H1 (cell line): ENCODE measurements at regions of chr18 and their contacts with region 1.

Region 1: DNA sequence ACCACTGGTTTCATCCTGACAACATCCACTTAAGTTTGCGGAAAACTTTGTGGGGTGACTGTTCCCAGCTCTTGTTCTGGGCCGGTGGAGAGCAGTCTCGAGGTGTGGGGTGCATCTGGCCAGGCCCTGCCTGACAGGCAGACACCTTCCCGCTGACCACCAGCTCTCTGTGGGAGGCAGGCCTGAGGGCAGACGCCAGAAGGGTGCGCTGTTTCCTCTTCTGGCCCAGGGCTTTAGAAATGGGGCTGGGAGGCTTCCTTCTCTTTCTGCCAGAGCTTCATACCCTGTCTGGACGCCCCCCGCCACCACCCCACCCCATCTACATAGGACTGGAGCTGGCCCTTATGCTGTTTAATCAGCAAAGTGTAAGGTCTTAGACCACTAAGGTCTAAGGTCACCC is 263.8 kb downstream of the LOXHD1 start:
- DNase-seq: peak in 1 of 2 experiments; percentile 88
- H3K4me3 ChIP-seq: no peak overlapping the region
- H3K27ac ChIP-seq: no peak overlapping the region
- H3K4me1 ChIP-seq: no peaks in the 10 kb centered on the region; a peak in 1 of 7 replicates
- H3K27me3 ChIP-seq: no peaks in the 10 kb centered on the region; a peak in 1 of 7 replicates
- CTCF ChIP-seq: peak; percentile 85 to 92 (median 86)
- EP300 ChIP-seq: no peak
- POLR2A ChIP-seq: no peak
- RAD21 ChIP-seq: peak; percentile 84

Region 2: DNA sequence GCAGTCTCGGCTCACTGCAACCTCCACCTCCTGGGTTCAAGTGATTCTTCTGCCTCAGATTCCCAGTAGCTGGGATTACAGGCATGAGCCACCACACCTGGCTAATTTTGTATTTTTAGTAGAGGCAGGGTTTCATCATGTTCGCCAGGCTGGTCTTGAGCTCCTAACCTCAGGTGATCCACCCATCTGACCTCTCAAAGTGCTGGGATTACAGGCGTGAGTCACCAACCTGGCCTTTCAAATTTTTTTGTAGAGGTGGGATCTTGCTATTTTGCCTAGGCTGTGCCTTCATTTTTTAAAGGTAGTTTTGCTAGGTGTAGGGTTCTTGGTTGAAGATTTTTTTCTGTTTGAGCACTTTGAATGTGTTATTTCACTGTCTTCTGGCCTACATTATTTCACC is 282.8 kb before region 1 on chr18:
- CTCF ChIA-PET with region 1: no interaction called
- POLR2A ChIA-PET with region 1: no interaction called
- DNase-seq: no peak
- H3K4me3 ChIP-seq: no peak overlapping the region
- H3K27ac ChIP-seq: no peak overlapping the region
- H3K4me1 ChIP-seq: no peaks in the 10 kb centered on the region
- H3K27me3 ChIP-seq: no peaks in the 10 kb centered on the region
- CTCF ChIP-seq: no peak
- EP300 ChIP-seq: no peak
- POLR2A ChIP-seq: no peak
- RAD21 ChIP-seq: no peak

Region 3: GRCh38 chr18:46350598-46351159 is 42.6 kb before region 1 on chr18:
- CTCF ChIA-PET with region 1: interaction called, 10 read pairs
- POLR2A ChIA-PET with region 1: no interaction called
- DNase-seq: no peak
- H3K4me3 ChIP-seq: no peak overlapping the region
- H3K27ac ChIP-seq: no peak overlapping the region
- H3K4me1 ChIP-seq: no peaks in the 10 kb centered on the region; a peak in 1 of 7 replicates
- H3K27me3 ChIP-seq: no peaks in the 10 kb centered on the region
- CTCF ChIP-seq: no peak
- EP300 ChIP-seq: no peak
- POLR2A ChIP-seq: no peak
- RAD21 ChIP-seq: no peak

Region 4: DNA sequence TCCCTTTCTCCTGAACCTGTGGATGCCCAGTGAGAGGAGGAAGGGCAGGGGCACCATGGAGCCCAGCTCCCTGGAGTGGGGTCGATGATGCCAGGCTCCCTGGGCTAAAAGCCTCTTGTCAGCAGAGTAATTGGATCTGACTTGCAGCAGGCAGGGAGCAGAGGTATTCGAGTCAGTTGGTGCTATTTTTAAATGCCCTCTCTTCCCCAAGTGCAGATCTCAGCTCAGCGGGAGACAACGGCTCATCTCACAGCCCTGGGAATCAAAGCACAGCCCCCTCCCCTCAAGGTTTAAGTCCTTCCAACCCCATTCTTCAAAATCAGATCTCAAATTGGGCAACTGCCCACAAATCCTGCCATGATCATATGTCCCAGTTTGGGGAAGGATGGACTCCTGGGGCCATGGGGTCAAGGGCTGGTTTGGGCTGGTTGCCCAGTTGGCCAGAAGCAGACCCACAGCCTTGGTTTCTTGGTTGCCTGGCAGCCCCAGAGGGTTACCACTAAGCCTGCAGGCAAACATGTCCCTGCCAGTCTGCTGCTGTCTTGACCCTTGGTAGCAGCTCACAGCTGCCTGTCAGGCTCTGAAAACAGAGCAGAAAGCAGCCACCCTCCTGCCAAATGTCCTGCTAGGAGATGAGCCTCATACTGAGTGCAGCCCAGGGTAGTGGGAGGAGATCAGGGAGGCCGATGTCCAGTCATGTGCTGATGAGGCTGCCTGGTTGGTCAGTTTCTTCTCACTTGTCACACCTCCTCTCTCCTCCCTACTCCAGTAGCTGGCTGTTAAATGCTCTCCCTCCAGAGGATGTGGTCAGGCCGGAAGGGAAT is 18.8 kb after region 1 on chr18:
- CTCF ChIA-PET with region 1: interaction called, 150 read pairs
- POLR2A ChIA-PET with region 1: interaction called, 3 read pairs
- DNase-seq: no peak
- H3K4me3 ChIP-seq: no peak overlapping the region; a peak in 1 of 8 replicates
- H3K27ac ChIP-seq: no peak overlapping the region
- H3K4me1 ChIP-seq: peaks cover 20 to 38% (median 26%) of the 10 kb centered on the region in 4 experiments
- H3K27me3 ChIP-seq: no peaks in the 10 kb centered on the region; a peak in 2 of 7 replicates
- CTCF ChIP-seq: no peak
- EP300 ChIP-seq: no peak
- POLR2A ChIP-seq: no peak
- RAD21 ChIP-seq: no peak

Region 5: GRCh38 chr18:46445914-46446313 is 52.7 kb after region 1 on chr18:
- CTCF ChIA-PET with region 1: interaction called, 12 read pairs
- POLR2A ChIA-PET with region 1: no interaction called
- DNase-seq: no peak
- H3K4me3 ChIP-seq: no peak overlapping the region
- H3K27ac ChIP-seq: no peak overlapping the region
- H3K4me1 ChIP-seq: peaks cover 5 to 11% (median 7%) of the 10 kb centered on the region in 4 experiments
- H3K27me3 ChIP-seq: no peaks in the 10 kb centered on the region
- CTCF ChIP-seq: no peak
- EP300 ChIP-seq: no peak
- POLR2A ChIP-seq: no peak
- RAD21 ChIP-seq: peak in 1 of 2 experiments; percentile 28; a peak in 1 of 4 replicates

Region 6: DNA sequence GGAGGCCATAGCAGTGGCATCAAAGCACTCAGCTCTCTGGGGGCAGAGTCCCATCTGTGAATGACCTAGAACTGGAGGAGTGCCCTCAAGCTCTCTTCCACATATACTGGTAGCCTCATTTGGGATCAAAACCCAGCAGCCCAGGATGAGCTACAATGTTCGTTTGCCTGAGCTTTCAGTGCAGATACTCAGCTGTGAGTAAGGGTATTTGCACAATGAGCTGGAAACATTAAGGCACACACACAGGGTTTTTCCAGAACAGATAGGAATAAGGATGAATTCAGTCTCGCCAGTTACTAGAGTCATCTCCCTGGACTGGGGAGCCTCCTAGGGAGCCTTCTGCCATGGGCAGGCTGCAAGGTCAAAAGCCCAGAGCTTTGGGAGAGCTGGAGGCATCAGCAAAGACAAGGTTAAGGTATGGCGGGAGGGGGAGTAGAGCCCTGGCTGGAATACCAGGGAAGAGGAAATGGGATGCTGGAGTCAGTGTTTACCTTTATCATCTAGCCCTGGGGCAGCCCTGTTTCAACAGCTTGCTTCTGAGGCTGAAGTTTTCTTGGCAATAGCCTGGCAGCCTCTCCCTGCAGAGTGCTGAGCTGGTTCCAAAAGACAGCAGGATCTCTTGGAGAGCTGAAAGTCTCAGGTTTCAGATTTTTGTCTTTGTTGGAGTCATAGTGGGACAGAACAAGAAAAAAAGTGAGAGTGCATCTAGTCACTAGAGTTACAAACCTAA is 76.1 kb after region 1 on chr18:
- CTCF ChIA-PET with region 1: interaction called, 14 read pairs
- POLR2A ChIA-PET with region 1: no interaction called
- DNase-seq: no peak
- H3K4me3 ChIP-seq: no peak overlapping the region
- H3K27ac ChIP-seq: no peak overlapping the region
- H3K4me1 ChIP-seq: peaks cover 5 to 11% (median 6%) of the 10 kb centered on the region in 4 experiments; a peak in 4 of 7 replicates
- H3K27me3 ChIP-seq: peaks cover 0 to 1% (median 0%) of the 10 kb centered on the region in 4 experiments; a peak in 1 of 7 replicates
- CTCF ChIP-seq: no peak
- EP300 ChIP-seq: no peak
- POLR2A ChIP-seq: no peak
- RAD21 ChIP-seq: no peak

Region 7: DNA sequence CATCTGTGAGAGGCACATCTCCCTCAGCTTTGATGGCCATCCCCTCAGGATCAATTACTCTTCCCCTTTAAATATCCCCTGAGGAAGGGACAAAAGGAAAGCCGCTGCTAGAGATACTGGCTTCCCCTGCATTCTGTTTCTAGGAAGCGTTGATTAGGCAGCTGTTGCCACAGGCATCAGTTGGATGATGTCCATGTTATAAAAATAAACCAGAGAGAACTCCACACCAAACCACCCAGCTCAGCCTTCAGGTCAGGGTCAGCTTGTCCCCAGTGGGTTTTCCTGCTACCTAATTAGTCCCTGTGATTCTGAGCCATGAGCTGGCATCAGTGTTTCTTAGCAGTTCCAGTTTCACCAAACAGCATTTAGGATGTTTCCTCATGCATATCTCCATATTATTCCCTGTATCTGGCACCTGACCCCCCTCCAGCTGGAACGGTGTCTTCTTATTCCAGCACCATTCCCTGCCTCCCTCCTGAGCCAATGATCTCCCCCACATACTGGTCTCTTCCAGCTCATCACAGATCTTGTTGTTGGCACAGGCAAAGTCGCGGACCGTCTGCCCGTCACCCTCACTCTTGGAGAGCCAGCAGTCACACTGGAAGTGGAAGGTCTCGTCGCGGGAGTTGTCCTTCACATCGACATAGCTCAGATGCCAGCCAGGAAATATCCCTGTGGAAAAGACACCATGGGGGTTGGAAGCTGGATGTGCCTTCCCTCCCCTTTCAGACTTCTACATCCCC is 95.4 kb after region 1 on chr18:
- CTCF ChIA-PET with region 1: interaction called, 56 read pairs
- POLR2A ChIA-PET with region 1: no interaction called
- DNase-seq: no peak
- H3K4me3 ChIP-seq: no peak overlapping the region
- H3K27ac ChIP-seq: no peak overlapping the region
- H3K4me1 ChIP-seq: peaks cover 0 to 10% (median 7%) of the 10 kb centered on the region in 4 experiments; a peak in 5 of 7 replicates
- H3K27me3 ChIP-seq: peaks cover 0 to 3% (median 1%) of the 10 kb centered on the region in 4 experiments; a peak in 1 of 7 replicates
- CTCF ChIP-seq: no peak
- EP300 ChIP-seq: no peak
- POLR2A ChIP-seq: no peak
- RAD21 ChIP-seq: no peak

Region 8: DNA sequence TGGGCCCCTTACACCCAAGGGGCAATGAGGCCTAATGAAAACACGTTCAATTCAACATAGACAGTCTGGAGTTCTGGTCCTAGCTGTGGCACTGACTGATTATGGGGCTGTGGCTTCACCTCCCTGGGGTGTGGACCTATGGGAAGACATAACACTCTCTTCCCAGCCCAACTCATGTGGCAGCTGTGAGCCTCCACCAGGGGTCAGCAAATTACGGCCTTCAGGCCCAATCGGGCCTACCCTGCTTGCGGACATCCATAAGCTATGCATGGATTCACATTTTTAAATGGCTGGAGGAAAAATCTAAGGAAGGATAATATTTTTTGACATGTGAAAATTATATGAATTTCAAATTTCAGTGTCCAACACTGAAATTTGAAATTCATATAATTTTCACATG is 162.5 kb after region 1 on chr18:
- CTCF ChIA-PET with region 1: interaction called, 10 read pairs
- POLR2A ChIA-PET with region 1: no interaction called
- DNase-seq: peak; percentile 21 to 76
- H3K4me3 ChIP-seq: no peak overlapping the region
- H3K27ac ChIP-seq: no peak overlapping the region
- H3K4me1 ChIP-seq: peaks cover 0 to 3% (median 0%) of the 10 kb centered on the region in 4 experiments; a peak in 1 of 7 replicates
- H3K27me3 ChIP-seq: no peaks in the 10 kb centered on the region
- CTCF ChIP-seq: peak; percentile 85 to 88 (median 88)
- EP300 ChIP-seq: no peak
- POLR2A ChIP-seq: no peak
- RAD21 ChIP-seq: peak; percentile 88 to 91